SK-N-SH (cell line): ENCODE measurements at regions of chr14 and their contacts with region 1.

Region 1: GRCh38 chr14:100677554-100678468 is 48.9 kb upstream of the DLK1 start:
- DNase-seq: peak; percentile 89
- H3K4me3 ChIP-seq: no peak overlapping the region
- H3K27ac ChIP-seq: peak overlapping the region in 1 of 2 experiments; percentile 99; a peak in 3 of 4 replicates
- H3K4me1 ChIP-seq: peaks cover 0 to 97% of the 10 kb centered on the region in 2 experiments; a peak in 2 of 4 replicates
- H3K27me3 ChIP-seq: no peaks in the 10 kb centered on the region
- CTCF ChIP-seq: no peak
- EP300 ChIP-seq: peak in 1 of 2 experiments; percentile 77; a peak in 2 of 4 replicates
- RAD21 ChIP-seq: peak; percentile 2; the same call in 1 of the 2 replicates

Region 2: DNA sequence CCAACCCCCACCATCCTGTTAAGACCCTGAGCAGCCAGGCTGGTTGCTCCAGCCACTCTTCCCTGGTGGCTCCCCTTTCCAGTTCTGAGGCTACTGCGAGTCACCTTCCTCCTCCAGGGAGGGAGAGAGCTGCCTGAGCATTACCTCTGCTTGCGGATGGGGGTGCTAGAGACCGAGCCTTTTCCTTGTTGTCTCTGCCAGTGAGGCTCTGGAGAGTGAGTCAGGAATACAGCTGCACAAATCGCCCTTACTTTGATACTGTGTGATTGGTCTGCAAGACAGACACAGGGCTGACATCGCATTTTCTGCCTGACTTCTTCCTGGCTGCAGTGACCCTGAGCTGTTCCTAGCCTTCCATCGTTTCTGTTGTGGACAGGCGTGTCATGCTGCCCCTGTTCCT is 260.3 kb before region 1 on chr14:
- CTCF ChIA-PET with region 1: interaction called, 8 read pairs
- POLR2A ChIA-PET with region 1: interaction called, 10 read pairs
- DNase-seq: peak; percentile 85
- H3K4me3 ChIP-seq: no peak overlapping the region; a peak in 1 of 4 replicates
- H3K27ac ChIP-seq: peak overlapping the region; percentile 52 to 84
- H3K4me1 ChIP-seq: peaks cover 9 to 53% of the 10 kb centered on the region in 2 experiments
- H3K27me3 ChIP-seq: no peaks in the 10 kb centered on the region
- CTCF ChIP-seq: peak; percentile 88
- EP300 ChIP-seq: peak in 1 of 2 experiments; percentile 49; a peak in 1 of 4 replicates
- RAD21 ChIP-seq: peak; percentile 98

Region 3: GRCh38 chr14:100662879-100663760 is 14.7 kb before region 1 on chr14:
- CTCF ChIA-PET with region 1: interaction called, 41 read pairs
- POLR2A ChIA-PET with region 1: interaction called, 8 read pairs
- DNase-seq: peak; percentile 85
- H3K4me3 ChIP-seq: no peak overlapping the region; a peak in 1 of 4 replicates
- H3K27ac ChIP-seq: peak overlapping the region in 1 of 2 experiments; percentile 77; a peak in 2 of 4 replicates
- H3K4me1 ChIP-seq: peaks cover 0 to 48% of the 10 kb centered on the region in 2 experiments; a peak in 1 of 4 replicates
- H3K27me3 ChIP-seq: no peaks in the 10 kb centered on the region
- CTCF ChIP-seq: peak; percentile 96
- EP300 ChIP-seq: no peak
- RAD21 ChIP-seq: peak; percentile 89

Region 4: GRCh38 chr14:100726550-100727085 is 48.8 kb after region 1 on chr14 and contains the start of gene DLK1:
- CTCF ChIA-PET with region 1: interaction called, 3 read pairs
- POLR2A ChIA-PET with region 1: interaction called, 103 read pairs
- DNase-seq: peak; percentile 91
- H3K4me3 ChIP-seq: peak within 1 kb of the TSS in 1 of 2 experiments; percentile 58; a peak in 2 of 4 replicates
- H3K27ac ChIP-seq: peak within 1 kb of the TSS in 1 of 2 experiments; percentile 91; a peak in 2 of 4 replicates
- H3K4me1 ChIP-seq: peaks cover 0 to 79% of the 10 kb centered on the region in 2 experiments; a peak in 1 of 4 replicates
- H3K27me3 ChIP-seq: peaks cover 23% of the 10 kb centered on the region; the same call in 1 of the 2 replicates
- CTCF ChIP-seq: no peak
- EP300 ChIP-seq: no peak
- RAD21 ChIP-seq: no peak
- polyA plus RNA-seq, gene DLK1: 1.2 and 1.7 TPM in 2 replicates

Region 5: GRCh38 chr14:100775831-100776591 is 98.2 kb after region 1 on chr14:
- CTCF ChIA-PET with region 1: interaction called, 4 read pairs
- POLR2A ChIA-PET with region 1: interaction called, 24 read pairs
- DNase-seq: no peak
- H3K4me3 ChIP-seq: no peak overlapping the region
- H3K27ac ChIP-seq: peak overlapping the region in 1 of 2 experiments; percentile 100; a peak in 2 of 4 replicates
- H3K4me1 ChIP-seq: peaks cover 0 to 91% of the 10 kb centered on the region in 2 experiments; a peak in 2 of 4 replicates
- H3K27me3 ChIP-seq: no peaks in the 10 kb centered on the region
- CTCF ChIP-seq: no peak
- EP300 ChIP-seq: no peak
- RAD21 ChIP-seq: no peak